H1 (cell line): ENCODE measurements at regions of chr12 and their contacts with region 1.

Region 1: GRCh38 chr12:8544295-8544694 is 3.6 kb upstream of the CLEC4E start:
- DNase-seq: peak; percentile 71 to 87
- H3K4me3 ChIP-seq: no peak overlapping the region
- H3K27ac ChIP-seq: no peak overlapping the region
- H3K4me1 ChIP-seq: no peaks in the 10 kb centered on the region
- H3K27me3 ChIP-seq: no peaks in the 10 kb centered on the region
- CTCF ChIP-seq: peak; percentile 39 to 87 (median 79)
- EP300 ChIP-seq: no peak
- POLR2A ChIP-seq: no peak
- RAD21 ChIP-seq: peak; percentile 80 to 86

Region 2: DNA sequence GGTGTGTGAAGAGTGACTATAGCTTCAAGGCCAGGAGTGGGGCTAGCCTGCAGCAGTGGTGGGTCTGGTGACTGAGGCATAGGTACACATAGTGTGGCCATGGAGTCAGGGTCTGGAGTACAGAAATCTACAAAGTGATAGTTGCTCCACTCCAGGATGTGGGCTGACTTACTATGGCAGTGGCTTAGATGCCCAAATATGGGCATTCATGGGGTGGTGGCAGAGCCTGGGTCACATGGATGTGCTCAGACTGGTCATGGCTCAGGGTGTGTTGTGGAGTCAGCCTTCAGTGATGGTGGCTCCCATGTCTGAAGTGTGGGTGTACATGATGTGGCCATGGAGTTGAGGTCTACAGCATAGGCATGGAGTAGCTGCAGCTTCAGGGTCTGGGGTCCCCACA is 61.2 kb before region 1 on chr12:
- CTCF ChIA-PET with region 1: no interaction called
- POLR2A ChIA-PET with region 1: no interaction called
- DNase-seq: no peak
- H3K4me3 ChIP-seq: no peak overlapping the region
- H3K27ac ChIP-seq: no peak overlapping the region
- H3K4me1 ChIP-seq: peaks cover 0 to 9% (median 5%) of the 10 kb centered on the region in 4 experiments; a peak in 4 of 7 replicates
- H3K27me3 ChIP-seq: no peaks in the 10 kb centered on the region
- CTCF ChIP-seq: no peak
- EP300 ChIP-seq: no peak
- POLR2A ChIP-seq: no peak
- RAD21 ChIP-seq: no peak

Region 3: GRCh38 chr12:8493084-8493483 is 51.2 kb before region 1 on chr12:
- CTCF ChIA-PET with region 1: no interaction called
- POLR2A ChIA-PET with region 1: no interaction called
- DNase-seq: no peak
- H3K4me3 ChIP-seq: no peak overlapping the region
- H3K27ac ChIP-seq: no peak overlapping the region
- H3K4me1 ChIP-seq: peaks cover 0 to 5% (median 2%) of the 10 kb centered on the region in 4 experiments; a peak in 5 of 7 replicates
- H3K27me3 ChIP-seq: no peaks in the 10 kb centered on the region
- CTCF ChIP-seq: no peak
- EP300 ChIP-seq: no peak
- POLR2A ChIP-seq: no peak
- RAD21 ChIP-seq: no peak

Region 4: GRCh38 chr12:8527250-8528130 is 16.8 kb before region 1 on chr12:
- CTCF ChIA-PET with region 1: interaction called, 11 read pairs
- POLR2A ChIA-PET with region 1: no interaction called
- DNase-seq: peak in 1 of 2 experiments; percentile 54
- H3K4me3 ChIP-seq: no peak overlapping the region
- H3K27ac ChIP-seq: no peak overlapping the region
- H3K4me1 ChIP-seq: peaks cover 0 to 9% (median 4%) of the 10 kb centered on the region in 4 experiments; a peak in 5 of 7 replicates
- H3K27me3 ChIP-seq: no peaks in the 10 kb centered on the region
- CTCF ChIP-seq: no peak
- EP300 ChIP-seq: no peak
- POLR2A ChIP-seq: no peak
- RAD21 ChIP-seq: no peak

Region 5: DNA sequence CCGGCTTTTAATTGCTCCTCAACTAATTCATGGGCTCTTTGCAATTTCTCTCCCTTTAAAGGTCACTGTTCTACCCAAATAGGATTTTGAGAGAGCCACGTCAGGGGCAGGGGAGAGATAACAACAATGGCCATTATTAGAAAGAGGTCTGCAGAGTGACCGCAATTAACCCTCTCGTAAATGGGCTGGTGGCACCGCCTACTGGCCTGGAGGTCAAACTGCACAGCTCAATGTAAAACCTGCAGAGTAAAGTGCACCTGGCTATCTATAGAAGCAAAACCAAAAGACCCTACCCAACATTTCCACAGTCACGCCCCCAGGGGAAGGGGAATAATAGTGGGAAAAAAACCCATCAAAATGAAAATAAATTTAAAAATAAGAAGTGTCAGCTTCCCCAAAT is 18.0 kb after region 1 on chr12:
- CTCF ChIA-PET with region 1: interaction called, 15 read pairs
- POLR2A ChIA-PET with region 1: no interaction called
- DNase-seq: peak in 1 of 2 experiments; percentile 72
- H3K4me3 ChIP-seq: no peak overlapping the region
- H3K27ac ChIP-seq: no peak overlapping the region
- H3K4me1 ChIP-seq: peaks cover 0 to 11% (median 6%) of the 10 kb centered on the region in 4 experiments; a peak in 6 of 7 replicates
- H3K27me3 ChIP-seq: no peaks in the 10 kb centered on the region
- CTCF ChIP-seq: peak; percentile 52 to 75 (median 63); a peak in 3 of 4 replicates
- EP300 ChIP-seq: no peak
- POLR2A ChIP-seq: no peak
- RAD21 ChIP-seq: peak in 1 of 2 experiments; percentile 39; a peak in 1 of 4 replicates

Region 6: DNA sequence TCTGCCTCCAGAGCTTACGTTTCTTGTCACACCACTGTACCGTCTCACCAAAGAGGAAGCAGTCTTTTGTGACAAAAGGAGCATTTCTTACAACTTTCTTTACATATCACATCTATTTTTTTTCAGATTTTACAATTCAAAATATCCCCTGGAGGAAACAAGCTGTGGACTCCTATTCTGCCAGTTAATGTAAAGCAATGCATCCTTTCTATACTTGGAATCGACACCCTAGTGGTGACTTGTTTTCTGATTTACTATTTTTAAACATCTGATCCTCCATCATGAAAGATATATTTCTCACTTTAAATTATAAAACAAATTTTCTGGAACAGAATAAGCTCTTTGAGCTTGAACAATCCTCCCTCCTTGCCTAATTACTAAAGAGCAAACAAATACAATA is 33.6 kb after region 1 on chr12:
- CTCF ChIA-PET with region 1: interaction called, 11 read pairs
- POLR2A ChIA-PET with region 1: no interaction called
- DNase-seq: no peak
- H3K4me3 ChIP-seq: no peak overlapping the region
- H3K27ac ChIP-seq: no peak overlapping the region
- H3K4me1 ChIP-seq: no peaks in the 10 kb centered on the region
- H3K27me3 ChIP-seq: no peaks in the 10 kb centered on the region
- CTCF ChIP-seq: no peak
- EP300 ChIP-seq: no peak
- POLR2A ChIP-seq: no peak
- RAD21 ChIP-seq: no peak

Region 7: GRCh38 chr12:8603856-8604255 is 59.6 kb after region 1 on chr12:
- CTCF ChIA-PET with region 1: interaction called, 39 read pairs
- POLR2A ChIA-PET with region 1: no interaction called
- DNase-seq: no peak
- H3K4me3 ChIP-seq: no peak overlapping the region
- H3K27ac ChIP-seq: no peak overlapping the region
- H3K4me1 ChIP-seq: peaks cover 0 to 4% (median 0%) of the 10 kb centered on the region in 4 experiments; a peak in 2 of 7 replicates
- H3K27me3 ChIP-seq: peaks cover 0 to 4% (median 0%) of the 10 kb centered on the region in 4 experiments; a peak in 3 of 7 replicates
- CTCF ChIP-seq: peak in 1 of 3 experiments; percentile 41; a peak in 2 of 4 replicates
- EP300 ChIP-seq: no peak
- POLR2A ChIP-seq: no peak
- RAD21 ChIP-seq: peak; percentile 35 to 46